Activated CD4-positive, alpha-beta T cell treated with anti-CD3 and anti-CD28 coated beads, Interleukin-2, amount 10 ng/mL, durations not matched to agents 24 days and 14 days (primary cell): ENCODE measurements at regions of chr7 and their contacts with region 1.

Region 1: GRCh38 chr7:17298207-17298839 is at the start of gene AHR:
- DNase-seq: peak; percentile 90
- H3K4me3 Mint-ChIP-seq: peak within 1 kb of the TSS; percentile 96
- H3K27ac Mint-ChIP-seq: peak within 1 kb of the TSS; percentile 97
- H3K4me1 Mint-ChIP-seq: peaks cover 23% of the 10 kb centered on the region
- H3K27me3 Mint-ChIP-seq: peaks cover 2% of the 10 kb centered on the region
- total RNA-seq, gene AHR: 28.2 and 30.7 TPM in 2 replicates

Region 2: GRCh38 chr7:16420649-16421332 is 877.5 kb before region 1 on chr7:
- intact Hi-C with region 1: loop called (anchors 2 kb)
- DNase-seq: peak; percentile 95
- H3K4me3 Mint-ChIP-seq: peak overlapping the region; percentile 89
- H3K27ac Mint-ChIP-seq: peak overlapping the region; percentile 98
- H3K4me1 Mint-ChIP-seq: peaks cover 18% of the 10 kb centered on the region
- H3K27me3 Mint-ChIP-seq: peaks cover 3% of the 10 kb centered on the region

Region 3: GRCh38 chr7:16982640-16983350 is 315.5 kb before region 1 on chr7:
- intact Hi-C with region 1: loop called (anchors 2 kb)
- DNase-seq: peak; percentile 75
- H3K4me3 Mint-ChIP-seq: peak overlapping the region; percentile 20
- H3K27ac Mint-ChIP-seq: no peak overlapping the region
- H3K4me1 Mint-ChIP-seq: peaks cover 15% of the 10 kb centered on the region
- H3K27me3 Mint-ChIP-seq: peaks cover 36% of the 10 kb centered on the region

Region 4: DNA sequence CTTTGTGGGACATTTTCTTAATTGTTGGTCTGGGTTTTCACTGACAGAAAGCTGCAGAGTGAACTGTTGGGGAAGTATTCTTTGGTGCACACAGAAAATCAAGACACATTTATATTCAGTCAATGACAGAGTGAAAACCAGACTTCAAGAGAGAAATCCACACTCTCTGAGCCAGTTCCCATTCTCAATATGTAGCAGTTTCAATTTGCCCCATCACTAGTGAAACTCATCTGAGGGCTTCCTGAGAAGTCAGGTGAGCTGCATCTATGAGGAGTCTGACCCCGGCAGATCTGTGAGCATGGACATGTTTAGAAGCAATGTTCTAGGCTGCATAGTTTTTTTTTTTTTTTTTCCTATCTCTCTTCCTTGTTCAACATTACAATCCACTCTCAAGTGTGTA is 163.5 kb before region 1 on chr7:
- intact Hi-C with region 1: loop called (anchors 1 kb)
- DNase-seq: peak; percentile 71
- H3K4me3 Mint-ChIP-seq: peak overlapping the region; percentile 29
- H3K27ac Mint-ChIP-seq: peak overlapping the region; percentile 35
- H3K4me1 Mint-ChIP-seq: peaks cover 56% of the 10 kb centered on the region
- H3K27me3 Mint-ChIP-seq: no peaks in the 10 kb centered on the region

Region 5: DNA sequence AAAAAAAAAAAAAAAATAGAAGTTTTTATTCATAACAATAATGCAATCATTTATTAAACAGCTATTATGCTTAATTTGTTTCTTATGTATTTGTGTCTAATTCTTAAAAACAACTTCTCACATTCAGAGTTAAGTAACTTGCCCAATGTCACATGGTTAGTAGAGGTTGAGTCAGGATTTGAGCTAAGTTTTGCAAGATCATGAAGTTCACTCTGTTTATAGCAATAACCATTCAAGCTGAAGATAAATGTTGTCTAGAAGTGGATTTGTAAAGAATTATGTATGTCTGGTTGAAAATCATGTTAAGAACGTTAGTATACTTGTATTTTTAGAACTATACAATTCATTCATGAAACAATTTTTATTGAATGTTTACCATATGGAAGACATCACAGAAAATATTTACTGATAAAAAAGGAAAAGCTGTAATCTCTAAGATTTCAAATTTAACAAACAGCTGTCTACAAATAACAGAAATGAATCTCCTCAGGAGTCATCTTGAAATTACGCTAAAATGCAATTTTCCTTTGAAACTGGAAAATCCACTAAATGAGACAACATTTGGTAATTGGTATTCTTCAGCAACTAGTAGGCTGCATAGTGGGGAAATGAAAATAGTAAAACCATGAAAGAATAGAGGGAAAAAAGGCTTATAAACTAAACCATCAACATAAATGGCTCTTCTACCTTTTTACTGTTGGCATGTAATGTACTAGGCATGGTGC is 70.4 kb before region 1 on chr7:
- intact Hi-C with region 1: no loop called
- DNase-seq: no peak
- H3K4me3 Mint-ChIP-seq: no peak overlapping the region
- H3K27ac Mint-ChIP-seq: no peak overlapping the region
- H3K4me1 Mint-ChIP-seq: peaks cover 6% of the 10 kb centered on the region
- H3K27me3 Mint-ChIP-seq: no peaks in the 10 kb centered on the region

Region 6: GRCh38 chr7:17255926-17256325 is 42.4 kb before region 1 on chr7:
- intact Hi-C with region 1: loop called (anchors 1 kb)
- DNase-seq: no peak
- H3K4me3 Mint-ChIP-seq: no peak overlapping the region
- H3K27ac Mint-ChIP-seq: no peak overlapping the region
- H3K4me1 Mint-ChIP-seq: peaks cover 8% of the 10 kb centered on the region
- H3K27me3 Mint-ChIP-seq: no peaks in the 10 kb centered on the region

Region 7: GRCh38 chr7:17402628-17403278 is 104.4 kb after region 1 on chr7:
- intact Hi-C with region 1: loop called (anchors 5 kb)
- DNase-seq: peak; percentile 50
- H3K4me3 Mint-ChIP-seq: peak overlapping the region; percentile 36
- H3K27ac Mint-ChIP-seq: peak overlapping the region; percentile 73
- H3K4me1 Mint-ChIP-seq: peaks cover 25% of the 10 kb centered on the region
- H3K27me3 Mint-ChIP-seq: peaks cover 4% of the 10 kb centered on the region